A549 (cell line): ENCODE measurements at regions of chr11 and their contacts with region 1.

Region 1: GRCh38 chr11:130904380-130904779 is 11.9 kb downstream of the SNX19 start:
- DNase-seq: no peak
- ATAC-seq: peak; percentile 61 to 64; a peak in 2 of 6 replicates
- H3K4me3 ChIP-seq: no peak overlapping the region
- H3K27ac ChIP-seq: no peak overlapping the region
- H3K4me1 ChIP-seq: 0 out of 3 replicates have a peak, but pooled peaks cover 2% of the 10 kb centered on the region
- CTCF ChIP-seq: peak; percentile 18; the same call in 1 of the 3 replicates
- EP300 ChIP-seq: no peak
- POLR2A ChIP-seq: no peak
- RAD21 ChIP-seq: no peak

Region 2: GRCh38 chr11:130886704-130887103 is 17.7 kb before region 1 on chr11:
- CTCF ChIA-PET with region 1: no interaction called
- POLR2A ChIA-PET with region 1: no interaction called
- DNase-seq: no peak
- ATAC-seq: no peak
- H3K4me3 ChIP-seq: no peak overlapping the region
- H3K27ac ChIP-seq: no peak overlapping the region
- H3K4me1 ChIP-seq: no peaks in the 10 kb centered on the region
- CTCF ChIP-seq: no peak
- EP300 ChIP-seq: no peak
- POLR2A ChIP-seq: no peak
- RAD21 ChIP-seq: no peak

Region 3: GRCh38 chr11:130916238-130916855 is 12.0 kb after region 1 on chr11 and contains the start of gene SNX19:
- CTCF ChIA-PET with region 1: interaction called, 20 read pairs
- POLR2A ChIA-PET with region 1: interaction called, 3 read pairs
- DNase-seq: peak; percentile 60 to 88
- ATAC-seq: peak; percentile 99 to 100
- H3K4me3 ChIP-seq: peak within 1 kb of the TSS; percentile 82
- H3K27ac ChIP-seq: peak within 1 kb of the TSS; percentile 85 to 99
- H3K4me1 ChIP-seq: no peaks in the 10 kb centered on the region
- CTCF ChIP-seq: peak; percentile 76
- EP300 ChIP-seq: no peak
- POLR2A ChIP-seq: peak; percentile 46
- RAD21 ChIP-seq: peak in 1 of 2 experiments; percentile 24; a peak in 1 of 5 replicates
- polyA plus RNA-seq, gene SNX19: 26.7 and 34.4 TPM in 2 replicates